Activated CD8-positive, alpha-beta T cell treated with anti-CD3 and anti-CD28 coated beads for 36 hours (primary cell): ENCODE measurements at regions of chr15 and their contacts with region 1.

Region 1: DNA sequence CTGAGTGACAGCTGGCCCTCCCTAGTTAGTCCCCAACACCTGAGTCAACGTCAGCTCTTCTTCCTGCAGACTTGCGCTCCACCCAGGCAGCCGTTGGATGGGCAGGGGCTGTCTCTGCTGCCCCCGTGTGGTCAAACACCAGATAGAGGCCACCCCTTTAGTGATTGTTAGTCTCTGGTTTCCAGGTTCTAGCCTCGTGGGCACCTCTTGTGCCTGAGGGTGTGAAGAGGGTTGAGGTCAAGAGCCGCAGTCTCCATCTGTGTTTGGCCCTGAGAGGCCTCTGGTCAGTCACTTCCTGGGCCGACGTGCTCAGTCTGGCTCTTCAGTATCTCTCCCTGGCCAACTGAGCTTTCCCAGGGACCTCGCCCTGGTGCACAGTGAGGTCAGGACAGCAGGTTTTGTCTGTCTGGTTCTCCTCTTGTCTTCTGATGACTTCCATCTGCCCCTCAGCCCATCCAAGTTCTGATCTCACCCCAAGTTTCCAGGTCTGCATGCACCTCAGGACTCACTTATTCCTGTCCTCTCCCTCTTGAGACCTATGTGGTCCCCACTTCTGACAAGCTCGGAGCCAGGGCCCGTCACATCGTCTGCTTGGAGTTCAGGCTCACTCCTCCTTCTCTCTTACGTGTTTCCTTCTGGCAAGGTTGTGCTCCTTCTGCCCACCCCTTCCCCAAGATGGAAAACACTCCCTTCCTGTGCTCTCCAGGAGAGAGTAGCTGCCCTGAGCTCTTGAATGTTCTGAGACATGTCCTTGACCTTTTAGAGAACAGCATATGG is 20.9 kb downstream of the CD276 start:
- DNase-seq: peak; percentile 77
- ATAC-seq: peak; percentile 90
- H3K4me3 Mint-ChIP-seq: no peak overlapping the region
- H3K27ac Mint-ChIP-seq: no peak overlapping the region
- H3K4me1 Mint-ChIP-seq: peaks cover 1% of the 10 kb centered on the region
- H3K27me3 Mint-ChIP-seq: peaks cover 13% of the 10 kb centered on the region
- CTCF ChIP-seq: peak; percentile 69

Region 2: DNA sequence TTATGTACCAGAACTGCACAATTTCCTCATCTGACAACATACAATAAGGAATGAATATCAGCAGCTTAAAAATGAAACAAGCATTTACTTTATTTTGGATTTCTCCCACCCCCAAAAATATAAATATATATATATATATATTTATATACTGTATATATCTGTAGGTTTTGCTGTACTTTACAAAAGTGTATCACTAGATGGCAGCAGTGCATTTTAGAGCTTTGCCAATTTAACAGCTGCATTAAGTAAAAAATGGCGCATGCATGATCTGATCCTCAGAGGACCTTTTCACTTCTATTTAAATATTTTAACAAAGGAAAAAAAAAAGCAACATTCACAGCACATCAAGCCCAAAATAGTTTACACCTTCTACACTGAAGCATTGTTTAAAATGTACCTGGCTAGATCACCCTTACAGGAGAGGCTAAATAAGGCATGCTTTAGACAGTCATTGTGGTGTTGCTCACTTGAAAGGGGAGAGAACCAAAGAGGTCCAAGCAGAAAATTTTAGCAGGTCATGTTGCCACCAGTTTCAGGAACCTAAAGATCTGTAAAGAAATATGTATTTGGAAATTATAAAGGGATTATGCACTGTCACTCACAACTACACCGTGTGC is 144.4 kb before region 1 on chr15:
- CTCF ChIA-PET with region 1: interaction called, 17 read pairs
- POLR2A ChIA-PET with region 1: interaction called, 3 read pairs
- intact Hi-C with region 1: loop called (anchors 5 kb)
- DNase-seq: peak; percentile 26
- ATAC-seq: no peak
- H3K4me3 Mint-ChIP-seq: no peak overlapping the region
- H3K27ac Mint-ChIP-seq: no peak overlapping the region
- H3K4me1 Mint-ChIP-seq: peaks cover 5% of the 10 kb centered on the region
- H3K27me3 Mint-ChIP-seq: no peaks in the 10 kb centered on the region
- CTCF ChIP-seq: peak; percentile 52

Region 3: DNA sequence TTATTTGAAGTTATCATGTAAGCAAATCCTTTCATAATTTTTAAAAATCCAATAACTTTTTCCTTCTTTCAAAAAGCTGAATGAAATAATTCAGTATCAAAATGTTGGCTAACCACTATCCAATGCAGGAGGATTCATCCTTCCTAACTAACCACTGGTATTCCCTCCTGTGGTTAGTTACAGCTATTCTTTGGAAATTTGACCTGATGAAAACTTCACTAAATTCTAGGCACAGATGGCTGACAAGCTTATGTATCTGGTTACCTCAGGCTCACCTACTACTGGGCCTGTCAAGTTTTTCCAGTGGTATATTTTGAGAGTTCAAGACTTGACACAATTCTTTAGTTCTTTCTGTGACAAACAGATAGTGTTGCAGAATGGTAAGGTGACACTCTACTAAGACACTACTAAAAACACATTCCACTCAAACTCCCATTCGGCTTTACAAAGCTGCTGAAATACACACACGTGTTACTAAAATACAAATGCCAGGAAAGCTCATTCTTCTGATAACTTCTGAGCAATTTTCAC is 87.7 kb before region 1 on chr15:
- CTCF ChIA-PET with region 1: interaction called, 15 read pairs
- POLR2A ChIA-PET with region 1: no interaction called
- intact Hi-C with region 1: no loop called
- DNase-seq: no peak
- ATAC-seq: no peak
- H3K4me3 Mint-ChIP-seq: no peak overlapping the region
- H3K27ac Mint-ChIP-seq: no peak overlapping the region
- H3K4me1 Mint-ChIP-seq: peaks cover 55% of the 10 kb centered on the region
- H3K27me3 Mint-ChIP-seq: no peaks in the 10 kb centered on the region
- CTCF ChIP-seq: no peak

Region 4: DNA sequence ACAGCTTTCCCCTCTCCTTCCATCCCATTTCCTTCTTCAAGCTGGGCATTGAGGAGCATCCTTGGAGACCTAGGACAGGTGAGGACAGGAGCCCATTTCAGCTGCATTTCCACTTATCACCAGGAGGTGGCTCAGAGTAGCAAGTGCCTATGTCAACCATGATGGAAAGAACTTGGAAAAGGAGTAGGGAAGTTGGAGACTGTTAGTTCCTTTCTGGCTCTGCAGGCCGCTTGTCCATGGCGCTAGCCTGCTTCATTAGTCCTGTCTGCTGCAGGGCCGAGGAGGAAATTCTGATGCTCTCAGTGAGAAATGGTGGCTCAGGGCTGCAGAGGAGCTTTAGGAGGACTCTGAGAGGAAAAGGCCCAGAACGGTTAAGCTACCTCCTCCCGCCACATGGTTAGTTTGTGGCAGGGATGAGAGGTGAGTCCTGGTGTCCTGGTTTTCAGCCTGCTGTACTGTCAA is 27.9 kb before region 1 on chr15:
- CTCF ChIA-PET with region 1: interaction called, 165 read pairs
- POLR2A ChIA-PET with region 1: interaction called, 3 read pairs
- intact Hi-C with region 1: loop called (anchors 2 kb)
- DNase-seq: peak; percentile 59
- ATAC-seq: peak; percentile 79
- H3K4me3 Mint-ChIP-seq: no peak overlapping the region
- H3K27ac Mint-ChIP-seq: no peak overlapping the region
- H3K4me1 Mint-ChIP-seq: peaks cover 8% of the 10 kb centered on the region
- H3K27me3 Mint-ChIP-seq: peaks cover 30% of the 10 kb centered on the region
- CTCF ChIP-seq: peak; percentile 85

Region 5: DNA sequence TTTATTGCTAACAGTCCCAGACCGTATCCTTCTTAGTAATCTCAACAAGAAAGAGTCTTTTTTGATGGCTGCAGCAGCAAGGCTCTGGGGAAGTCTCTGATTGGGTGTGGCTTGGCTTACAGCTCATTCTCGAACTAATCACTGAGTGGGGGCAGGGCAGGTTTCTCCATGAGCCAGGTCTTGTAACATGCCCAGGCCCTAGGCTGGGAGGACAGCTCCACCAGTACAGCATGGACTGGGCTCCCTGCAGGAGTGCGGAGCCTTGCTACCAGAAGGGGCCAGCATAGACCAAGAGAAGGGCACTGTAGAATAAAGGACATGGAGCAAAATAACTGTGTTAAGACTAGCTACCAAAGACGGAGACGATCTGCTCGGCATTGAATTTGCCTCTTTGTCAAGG is 13.7 kb before region 1 on chr15:
- CTCF ChIA-PET with region 1: interaction called, 15 read pairs
- POLR2A ChIA-PET with region 1: no interaction called
- intact Hi-C with region 1: no loop called
- DNase-seq: no peak
- ATAC-seq: no peak
- H3K4me3 Mint-ChIP-seq: no peak overlapping the region
- H3K27ac Mint-ChIP-seq: no peak overlapping the region
- H3K4me1 Mint-ChIP-seq: peaks cover under 1% of the 10 kb centered on the region
- H3K27me3 Mint-ChIP-seq: peaks cover 42% of the 10 kb centered on the region
- CTCF ChIP-seq: no peak

Region 6: GRCh38 chr15:73866881-73867410 is 161.9 kb after region 1 on chr15:
- CTCF ChIA-PET with region 1: no interaction called
- POLR2A ChIA-PET with region 1: no interaction called
- intact Hi-C with region 1: no loop called
- DNase-seq: no peak
- ATAC-seq: no peak
- H3K4me3 Mint-ChIP-seq: no peak overlapping the region
- H3K27ac Mint-ChIP-seq: no peak overlapping the region
- H3K4me1 Mint-ChIP-seq: peaks cover 5% of the 10 kb centered on the region
- H3K27me3 Mint-ChIP-seq: peaks cover 3% of the 10 kb centered on the region
- CTCF ChIP-seq: no peak